ENCODE measurements at regions of chr4 and their contacts with region 1.

Region 1: DNA sequence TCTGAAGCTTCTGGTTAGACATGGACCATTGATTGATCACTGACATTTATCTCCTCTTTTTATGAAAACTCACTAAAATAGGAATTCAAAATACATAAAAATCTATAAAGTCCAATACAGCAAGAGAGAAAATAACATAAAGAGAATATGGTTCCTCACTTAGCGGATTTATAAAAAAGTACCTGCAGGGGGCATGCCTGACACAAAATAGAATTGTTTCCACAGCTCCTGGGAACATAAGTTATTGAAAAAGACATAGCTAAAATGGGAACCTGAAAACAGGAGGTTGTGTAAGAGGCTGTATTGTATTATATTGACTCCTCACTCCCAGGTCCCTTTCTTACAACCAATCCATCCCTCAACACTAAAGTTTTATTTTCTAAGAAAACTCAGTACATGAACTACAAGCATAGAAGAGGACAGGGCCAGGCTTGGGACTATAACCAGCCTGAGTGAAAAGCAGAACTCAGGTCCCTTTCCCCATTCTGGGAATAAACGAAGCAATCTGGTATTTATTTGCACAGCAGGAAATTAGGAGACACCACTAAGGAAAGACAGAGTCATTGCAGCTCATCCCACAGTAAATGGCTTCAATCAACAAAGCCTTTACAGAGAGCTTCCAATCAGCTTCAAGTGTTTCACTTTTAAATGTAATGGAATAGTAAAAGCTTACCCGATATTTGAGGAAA is 121.1 kb upstream of the NDST4 start:
- DNase-seq: peak; percentile 28
- H3K4me3 Mint-ChIP-seq: no peak overlapping the region
- H3K27ac Mint-ChIP-seq: no peak overlapping the region
- H3K4me1 Mint-ChIP-seq: peaks cover 8% of the 10 kb centered on the region
- H3K27me3 Mint-ChIP-seq: peaks cover 24% of the 10 kb centered on the region
- CTCF ChIP-seq: peak; percentile 40

Region 2: GRCh38 chr4:114780205-114780604 is 454.3 kb before region 1 on chr4:
- CTCF ChIA-PET with region 1: interaction called, 5 read pairs
- POLR2A ChIA-PET with region 1: no interaction called
- intact Hi-C with region 1: loop called (anchors 5 kb)
- DNase-seq: peak; percentile 64
- H3K4me3 Mint-ChIP-seq: no peak overlapping the region
- H3K27ac Mint-ChIP-seq: no peak overlapping the region
- H3K4me1 Mint-ChIP-seq: no peaks in the 10 kb centered on the region
- H3K27me3 Mint-ChIP-seq: peaks cover 12% of the 10 kb centered on the region
- CTCF ChIP-seq: peak; percentile 54

Region 3: GRCh38 chr4:115090483-115091075 is 144.0 kb before region 1 on chr4:
- CTCF ChIA-PET with region 1: no interaction called
- POLR2A ChIA-PET with region 1: no interaction called
- intact Hi-C with region 1: loop called (anchors 5 kb)
- DNase-seq: peak; percentile 53
- H3K4me3 Mint-ChIP-seq: no peak overlapping the region
- H3K27ac Mint-ChIP-seq: no peak overlapping the region
- H3K4me1 Mint-ChIP-seq: no peaks in the 10 kb centered on the region
- H3K27me3 Mint-ChIP-seq: peaks cover 26% of the 10 kb centered on the region
- CTCF ChIP-seq: peak; percentile 53

Region 4: DNA sequence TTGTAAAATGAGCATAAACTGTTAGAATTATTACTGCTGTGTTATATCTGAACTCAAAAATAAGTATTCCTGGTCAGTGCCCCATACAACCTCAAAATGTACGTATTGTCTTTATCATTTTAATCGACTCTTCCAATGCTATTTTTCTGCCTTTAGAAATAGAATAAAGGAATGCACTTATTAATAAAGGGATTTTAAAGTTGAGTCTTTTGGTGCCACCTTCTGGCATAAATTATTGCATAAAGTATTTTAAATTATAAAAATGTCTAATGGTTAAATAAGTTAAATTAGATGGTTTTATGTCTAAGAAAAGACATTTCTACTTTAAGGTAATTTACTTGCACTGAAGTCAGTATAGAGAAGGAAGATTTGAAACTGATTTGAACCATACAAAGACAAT is 302.8 kb after region 1 on chr4:
- CTCF ChIA-PET with region 1: interaction called, 7 read pairs
- POLR2A ChIA-PET with region 1: no interaction called
- intact Hi-C with region 1: loop called (anchors 1 kb)
- DNase-seq: peak; percentile 26
- H3K4me3 Mint-ChIP-seq: no peak overlapping the region
- H3K27ac Mint-ChIP-seq: no peak overlapping the region
- H3K4me1 Mint-ChIP-seq: no peaks in the 10 kb centered on the region
- H3K27me3 Mint-ChIP-seq: peaks cover 19% of the 10 kb centered on the region
- CTCF ChIP-seq: peak; percentile 44

Region 5: GRCh38 chr4:115781528-115782146 is 547.1 kb after region 1 on chr4:
- CTCF ChIA-PET with region 1: no interaction called
- POLR2A ChIA-PET with region 1: no interaction called
- intact Hi-C with region 1: loop called (anchors 10 kb)
- DNase-seq: no peak
- H3K4me3 Mint-ChIP-seq: no peak overlapping the region
- H3K27ac Mint-ChIP-seq: no peak overlapping the region
- H3K4me1 Mint-ChIP-seq: no peaks in the 10 kb centered on the region
- H3K27me3 Mint-ChIP-seq: no peaks in the 10 kb centered on the region
- CTCF ChIP-seq: no peak

Measured in MCF 10A (cell line).